HepG2 (cell line): ENCODE measurements at regions of chr17 and their contacts with region 1.

Region 1: GRCh38 chr17:72502371-72503341 is 381.8 kb downstream of the SOX9 start:
- DNase-seq: peak; percentile 93
- ATAC-seq: peak; percentile 82
- H3K4me3 ChIP-seq: peak overlapping the region; percentile 60 to 78 (median 60)
- H3K27ac ChIP-seq: peak overlapping the region; percentile 78
- H3K4me1 ChIP-seq: peaks cover 58% of the 10 kb centered on the region
- H3K27me3 ChIP-seq: no peaks in the 10 kb centered on the region
- CTCF ChIP-seq: 0 out of 2 replicates have a peak, but pooled peaks have one; percentile 1
- EP300 ChIP-seq: peak in 1 of 2 experiments; percentile 91; a peak in 2 of 4 replicates
- POLR2A ChIP-seq: no peak
- RAD21 ChIP-seq: no peak

Region 2: DNA sequence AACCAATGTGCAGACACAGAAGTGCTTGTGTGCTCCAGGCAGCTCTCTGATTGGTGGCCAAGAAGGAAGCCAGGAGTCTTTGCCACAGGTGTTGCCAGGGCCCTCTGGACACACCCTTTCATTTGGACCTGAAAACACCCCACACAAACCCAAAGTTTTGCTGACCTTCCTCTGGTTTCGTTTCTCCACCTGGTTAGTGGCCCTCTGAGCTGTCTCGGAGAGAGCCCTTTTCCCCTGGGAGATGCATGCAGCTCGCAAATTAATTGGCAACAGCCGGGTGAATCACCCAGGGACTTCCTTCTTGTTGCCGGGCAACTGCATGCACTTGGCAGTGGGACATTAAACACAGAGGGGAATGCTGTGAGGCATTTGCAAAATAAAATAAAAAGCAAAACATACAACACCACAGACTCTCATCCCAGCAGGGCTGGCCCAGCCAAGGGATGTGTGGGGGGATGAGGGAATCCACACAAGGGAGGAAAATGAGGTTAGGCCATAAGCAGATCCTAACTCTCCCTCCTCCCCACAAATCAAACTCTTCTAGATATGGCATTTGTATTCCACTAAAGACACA is 95.2 kb before region 1 on chr17:
- CTCF ChIA-PET with region 1: no interaction called
- POLR2A ChIA-PET with region 1: interaction called, 5 read pairs
- in situ Hi-C with region 1: no loop called
- intact Hi-C with region 1: loop called (anchors 5 kb)
- DNase-seq: no peak
- ATAC-seq: no peak
- H3K4me3 ChIP-seq: no peak overlapping the region
- H3K27ac ChIP-seq: peak overlapping the region; percentile 29
- H3K4me1 ChIP-seq: peaks cover 100% of the 10 kb centered on the region
- H3K27me3 ChIP-seq: no peaks in the 10 kb centered on the region
- CTCF ChIP-seq: no peak
- EP300 ChIP-seq: no peak
- POLR2A ChIP-seq: no peak
- RAD21 ChIP-seq: no peak

Region 3: DNA sequence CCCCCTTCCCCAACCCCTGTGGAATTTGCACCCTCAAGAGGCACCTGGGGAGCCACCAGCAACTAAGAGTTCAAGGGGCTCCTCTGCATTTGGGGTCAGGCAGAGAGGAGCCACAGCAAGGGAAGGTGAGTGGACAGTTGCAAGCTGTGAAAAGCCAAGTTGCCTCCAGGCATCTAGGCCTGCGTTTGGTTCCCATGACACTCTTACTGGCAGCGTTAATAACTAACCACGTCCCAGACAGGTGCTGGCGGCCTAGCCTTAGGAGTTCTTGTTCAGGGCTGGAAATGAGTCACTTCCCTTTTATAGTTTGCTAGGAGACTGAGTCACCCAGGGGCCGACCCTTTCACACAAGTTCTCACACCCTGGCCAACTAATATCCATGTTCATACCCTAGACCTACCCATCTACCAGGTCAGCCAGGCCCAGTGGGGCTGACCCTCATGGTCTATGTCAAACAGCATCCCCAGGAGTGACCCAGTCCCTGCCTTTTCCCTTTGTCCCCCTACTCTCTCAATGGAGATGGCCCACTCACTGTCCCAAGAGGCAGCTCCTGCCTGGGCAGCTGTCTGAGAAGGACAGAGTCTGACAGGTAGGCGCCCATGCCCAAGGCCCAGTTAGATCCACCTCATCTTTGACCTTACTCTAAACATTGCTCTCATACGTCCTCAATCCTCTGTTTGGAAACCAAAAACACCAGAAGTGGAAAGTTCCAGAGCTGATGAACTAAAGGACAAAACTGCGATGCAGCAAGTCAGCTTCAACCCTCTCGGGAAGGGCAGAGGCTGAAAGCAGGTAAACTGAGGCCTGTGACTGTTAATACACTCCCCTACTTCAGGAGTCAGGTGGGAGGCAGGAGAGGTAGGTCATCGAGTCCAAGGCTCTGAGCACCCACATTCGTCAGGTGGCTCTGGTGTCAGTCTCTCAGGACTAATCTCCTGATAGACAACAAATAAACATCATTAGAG is 81.2 kb before region 1 on chr17:
- CTCF ChIA-PET with region 1: no interaction called
- POLR2A ChIA-PET with region 1: interaction called, 17 read pairs
- in situ Hi-C with region 1: no loop called
- intact Hi-C with region 1: no loop called
- DNase-seq: peak; percentile 99
- ATAC-seq: peak; percentile 91
- H3K4me3 ChIP-seq: peak overlapping the region in 1 of 3 experiments; percentile 31; a peak in 2 of 6 replicates
- H3K27ac ChIP-seq: peak overlapping the region; percentile 83
- H3K4me1 ChIP-seq: peaks cover 86% of the 10 kb centered on the region
- H3K27me3 ChIP-seq: no peaks in the 10 kb centered on the region
- CTCF ChIP-seq: no peak
- EP300 ChIP-seq: peak in 1 of 2 experiments; percentile 92; a peak in 3 of 4 replicates
- POLR2A ChIP-seq: peak; percentile 48 to 68
- RAD21 ChIP-seq: peak; percentile 34

Region 4: GRCh38 chr17:72445055-72445991 is 57.3 kb before region 1 on chr17:
- CTCF ChIA-PET with region 1: no interaction called
- POLR2A ChIA-PET with region 1: interaction called, 17 read pairs
- in situ Hi-C with region 1: no loop called
- intact Hi-C with region 1: no loop called
- DNase-seq: peak; percentile 84
- ATAC-seq: peak; percentile 55
- H3K4me3 ChIP-seq: peak overlapping the region in 1 of 3 experiments; percentile 48; a peak in 2 of 6 replicates
- H3K27ac ChIP-seq: peak overlapping the region; percentile 96
- H3K4me1 ChIP-seq: peaks cover 97% of the 10 kb centered on the region
- H3K27me3 ChIP-seq: no peaks in the 10 kb centered on the region
- CTCF ChIP-seq: no peak; the same call in 1 of the 2 replicates
- EP300 ChIP-seq: peak in 1 of 2 experiments; percentile 92; a peak in 2 of 4 replicates
- POLR2A ChIP-seq: peak in 1 of 2 experiments; percentile 16; a peak in 1 of 4 replicates
- RAD21 ChIP-seq: no peak

Region 5: DNA sequence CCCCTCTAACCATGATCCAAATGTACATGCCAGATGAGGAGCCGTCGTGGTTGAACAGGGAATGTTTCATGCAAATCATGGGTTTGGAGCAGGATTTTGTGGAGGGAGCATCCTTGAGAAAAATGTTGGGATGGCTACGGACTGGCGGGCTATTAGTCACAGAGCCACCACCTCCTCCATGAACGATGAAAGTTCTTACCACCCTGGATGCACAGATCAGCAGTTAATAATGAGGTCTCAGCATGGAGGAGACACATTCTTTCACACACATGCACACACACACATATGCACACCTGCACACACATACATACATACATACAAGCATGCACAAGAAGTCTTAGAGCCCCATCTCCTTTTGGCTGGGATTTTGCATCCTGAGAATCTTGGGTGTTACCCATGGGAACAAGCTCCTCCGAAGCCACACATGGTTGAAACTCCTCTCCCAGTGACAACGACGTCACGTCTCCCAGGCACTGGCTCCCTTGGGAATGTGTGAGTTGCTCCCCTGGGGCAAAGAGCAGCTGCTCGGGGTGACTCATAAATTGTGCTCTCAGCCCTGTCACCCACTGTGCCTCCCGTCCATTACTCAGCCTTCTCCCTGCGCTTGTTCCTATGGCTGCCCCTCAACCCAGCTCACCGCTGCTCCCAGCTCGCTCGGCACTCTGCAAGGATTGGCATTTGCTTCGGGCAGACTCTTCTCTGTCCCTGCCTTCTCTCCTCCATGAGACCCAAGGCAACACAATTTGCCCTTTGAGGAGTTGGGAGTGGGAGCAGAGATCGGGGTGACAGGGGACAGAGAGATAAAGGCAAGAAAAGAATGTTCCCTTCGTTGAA is 37.2 kb before region 1 on chr17:
- CTCF ChIA-PET with region 1: no interaction called
- POLR2A ChIA-PET with region 1: interaction called, 22 read pairs
- in situ Hi-C with region 1: no loop called
- intact Hi-C with region 1: no loop called
- DNase-seq: peak; percentile 89
- ATAC-seq: peak; percentile 98
- H3K4me3 ChIP-seq: peak overlapping the region; percentile 7 to 64 (median 43); a peak in 5 of 6 replicates
- H3K27ac ChIP-seq: peak overlapping the region; percentile 70
- H3K4me1 ChIP-seq: peaks cover 98% of the 10 kb centered on the region
- H3K27me3 ChIP-seq: no peaks in the 10 kb centered on the region
- CTCF ChIP-seq: no peak
- EP300 ChIP-seq: peak; percentile 41 to 66; a peak in 2 of 4 replicates
- POLR2A ChIP-seq: peak in 1 of 2 experiments; percentile 48; a peak in 1 of 4 replicates
- RAD21 ChIP-seq: peak; percentile 12; the same call in 1 of the 2 replicates

Region 6: GRCh38 chr17:72488551-72489244 is 14.0 kb before region 1 on chr17:
- CTCF ChIA-PET with region 1: no interaction called
- POLR2A ChIA-PET with region 1: interaction called, 11 read pairs
- in situ Hi-C with region 1: no loop called
- intact Hi-C with region 1: no loop called
- DNase-seq: no peak
- ATAC-seq: no peak; the same call in 2 of the 3 replicates
- H3K4me3 ChIP-seq: 0 out of 6 replicates have a peak overlapping the region, but pooled peaks of 1 of the 3 experiments have one; percentile 4
- H3K27ac ChIP-seq: no peak overlapping the region
- H3K4me1 ChIP-seq: peaks cover 59% of the 10 kb centered on the region
- H3K27me3 ChIP-seq: no peaks in the 10 kb centered on the region
- CTCF ChIP-seq: no peak
- EP300 ChIP-seq: no peak
- POLR2A ChIP-seq: no peak
- RAD21 ChIP-seq: no peak

Region 7: DNA sequence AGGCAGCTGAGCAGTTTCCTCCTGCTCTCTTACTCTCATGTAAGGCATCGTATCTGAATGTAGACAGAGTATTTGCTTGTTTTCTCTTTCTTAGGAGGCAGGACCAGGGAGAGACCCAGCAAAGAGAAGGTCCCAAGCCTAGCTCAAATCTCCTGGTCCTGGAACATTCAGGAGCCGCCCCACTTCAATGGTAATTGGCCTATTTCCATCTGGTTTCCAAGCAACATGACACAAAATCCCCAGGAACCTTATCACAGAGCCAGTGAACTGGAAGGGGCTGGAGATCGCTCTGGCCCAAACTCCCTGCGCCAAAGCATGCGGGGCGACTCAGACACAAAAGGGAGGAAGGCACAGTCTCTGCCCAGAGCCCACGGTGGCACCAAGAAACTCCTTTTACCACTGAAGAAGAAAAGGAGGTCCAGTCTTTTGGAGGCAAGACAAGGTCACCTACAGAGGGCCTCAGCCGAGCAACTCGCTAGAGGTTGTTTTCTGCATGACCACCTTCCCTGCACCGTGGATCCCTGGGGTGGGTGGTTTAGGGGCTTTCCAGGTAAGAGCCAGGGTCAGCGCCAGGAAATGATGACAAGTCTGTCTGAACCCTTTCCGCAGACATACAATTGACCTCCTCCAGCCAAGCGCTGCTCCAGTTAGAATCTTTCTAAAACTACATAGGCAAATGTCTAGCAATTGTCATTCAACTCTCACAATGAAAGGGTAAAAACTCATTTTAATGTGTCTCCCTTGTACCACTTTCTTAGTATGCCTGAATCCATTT is 12.8 kb after region 1 on chr17:
- CTCF ChIA-PET with region 1: no interaction called
- POLR2A ChIA-PET with region 1: interaction called, 32 read pairs
- in situ Hi-C with region 1: no loop called
- intact Hi-C with region 1: loop called (anchors 1 kb)
- DNase-seq: no peak
- ATAC-seq: no peak
- H3K4me3 ChIP-seq: no peak overlapping the region
- H3K27ac ChIP-seq: no peak overlapping the region
- H3K4me1 ChIP-seq: peaks cover 87% of the 10 kb centered on the region
- H3K27me3 ChIP-seq: no peaks in the 10 kb centered on the region
- CTCF ChIP-seq: no peak
- EP300 ChIP-seq: no peak
- POLR2A ChIP-seq: no peak
- RAD21 ChIP-seq: no peak

Region 8: GRCh38 chr17:72775919-72776318 is 273.3 kb after region 1 on chr17:
- CTCF ChIA-PET with region 1: no interaction called
- POLR2A ChIA-PET with region 1: no interaction called
- in situ Hi-C with region 1: no loop called
- intact Hi-C with region 1: no loop called
- DNase-seq: no peak
- ATAC-seq: no peak
- H3K4me3 ChIP-seq: no peak overlapping the region
- H3K27ac ChIP-seq: no peak overlapping the region
- H3K4me1 ChIP-seq: no peaks in the 10 kb centered on the region
- H3K27me3 ChIP-seq: no peaks in the 10 kb centered on the region
- CTCF ChIP-seq: no peak
- EP300 ChIP-seq: no peak
- POLR2A ChIP-seq: no peak
- RAD21 ChIP-seq: no peak